ENCODE measurements at regions of chr5 and their contacts with region 1.

Region 1: DNA sequence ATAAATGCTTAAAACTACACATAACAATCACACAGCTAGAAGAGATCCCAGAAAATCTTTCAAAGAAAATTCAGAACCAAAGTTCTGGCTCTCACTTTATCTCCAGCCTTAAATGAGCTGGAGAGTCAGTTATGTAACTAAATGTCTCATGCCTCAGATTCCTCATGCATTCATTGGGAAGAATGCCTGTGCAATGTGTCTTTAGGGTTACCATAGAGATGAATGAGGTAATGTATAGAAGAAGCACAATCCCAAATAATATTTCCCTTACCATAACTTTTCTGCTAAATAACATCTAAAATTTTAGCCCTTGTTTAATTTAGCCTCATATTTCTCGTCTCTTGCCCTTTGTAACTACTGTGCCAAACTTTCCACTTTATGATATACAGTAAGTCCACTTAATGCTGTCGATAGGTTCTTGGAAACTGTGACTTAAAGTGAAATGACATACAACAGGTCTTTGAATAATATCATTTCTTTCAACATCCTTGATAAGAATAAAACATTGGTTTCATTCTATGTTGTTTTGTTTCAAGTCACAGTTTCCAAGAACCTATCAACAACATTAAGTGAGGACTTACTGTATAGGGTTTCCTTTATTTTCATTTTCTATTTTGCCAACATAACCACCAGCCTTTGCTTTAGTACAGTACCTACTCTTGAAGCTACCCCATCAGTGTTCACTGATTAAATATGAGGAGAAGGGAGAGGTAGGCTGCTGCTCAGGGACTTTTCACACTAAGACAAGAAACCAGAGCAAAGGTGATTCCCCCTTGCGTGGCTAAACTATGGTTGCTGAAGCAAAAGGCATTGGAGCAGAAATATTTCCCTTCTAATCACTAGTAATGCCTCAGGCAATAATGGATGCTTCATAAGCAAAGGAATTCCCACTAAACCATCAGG is 295.7 kb upstream of the PTGER4 start:
- DNase-seq: peak; percentile 80
- H3K4me3 Mint-ChIP-seq: peak overlapping the region; percentile 63
- H3K27ac Mint-ChIP-seq: peak overlapping the region; percentile 86
- H3K4me1 Mint-ChIP-seq: peaks cover 70% of the 10 kb centered on the region
- H3K27me3 Mint-ChIP-seq: no peaks in the 10 kb centered on the region

Region 2: GRCh38 chr5:40333459-40334244 is 50.3 kb before region 1 on chr5:
- intact Hi-C with region 1: loop called (anchors 1 kb)
- DNase-seq: peak; percentile 59
- H3K4me3 Mint-ChIP-seq: no peak overlapping the region
- H3K27ac Mint-ChIP-seq: no peak overlapping the region
- H3K4me1 Mint-ChIP-seq: peaks cover 19% of the 10 kb centered on the region
- H3K27me3 Mint-ChIP-seq: no peaks in the 10 kb centered on the region

Region 3: GRCh38 chr5:40365342-40366330 is 18.4 kb before region 1 on chr5:
- intact Hi-C with region 1: no loop called
- DNase-seq: no peak
- H3K4me3 Mint-ChIP-seq: no peak overlapping the region
- H3K27ac Mint-ChIP-seq: no peak overlapping the region
- H3K4me1 Mint-ChIP-seq: peaks cover 4% of the 10 kb centered on the region
- H3K27me3 Mint-ChIP-seq: no peaks in the 10 kb centered on the region

Region 4: GRCh38 chr5:40410231-40410861 is 26.3 kb after region 1 on chr5:
- intact Hi-C with region 1: loop called (anchors 1 kb)
- DNase-seq: peak; percentile 93
- H3K4me3 Mint-ChIP-seq: peak overlapping the region; percentile 79
- H3K27ac Mint-ChIP-seq: peak overlapping the region; percentile 93
- H3K4me1 Mint-ChIP-seq: peaks cover 51% of the 10 kb centered on the region
- H3K27me3 Mint-ChIP-seq: no peaks in the 10 kb centered on the region

Region 5: GRCh38 chr5:40486437-40487275 is 102.7 kb after region 1 on chr5:
- intact Hi-C with region 1: loop called (anchors 1 kb)
- DNase-seq: peak; percentile 89
- H3K4me3 Mint-ChIP-seq: peak overlapping the region; percentile 45
- H3K27ac Mint-ChIP-seq: peak overlapping the region; percentile 89
- H3K4me1 Mint-ChIP-seq: peaks cover 55% of the 10 kb centered on the region
- H3K27me3 Mint-ChIP-seq: no peaks in the 10 kb centered on the region

Region 6: DNA sequence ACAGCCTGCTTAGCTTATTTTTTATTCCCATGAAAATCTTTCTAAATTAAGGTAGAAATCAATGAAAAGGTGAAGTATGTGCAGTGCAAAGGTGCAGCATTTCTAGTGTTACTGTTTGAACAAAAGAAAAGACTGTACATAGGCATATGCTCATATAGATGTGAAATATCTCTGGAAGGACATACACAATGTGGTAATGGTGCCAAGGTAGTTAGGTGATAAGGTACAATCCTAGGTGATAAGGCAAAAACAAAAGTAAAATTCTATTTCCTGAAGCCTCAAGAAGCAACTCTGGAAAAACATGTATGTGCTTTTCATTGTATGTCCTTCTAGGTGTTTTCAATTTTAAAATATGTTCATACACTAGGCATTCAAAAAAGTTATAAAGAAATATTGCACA is 156.3 kb after region 1 on chr5:
- intact Hi-C with region 1: no loop called
- DNase-seq: no peak
- H3K4me3 Mint-ChIP-seq: no peak overlapping the region
- H3K27ac Mint-ChIP-seq: no peak overlapping the region
- H3K4me1 Mint-ChIP-seq: no peaks in the 10 kb centered on the region
- H3K27me3 Mint-ChIP-seq: no peaks in the 10 kb centered on the region

Region 7: GRCh38 chr5:40736103-40736875 is 352.3 kb after region 1 on chr5:
- intact Hi-C with region 1: loop called (anchors 2 kb)
- DNase-seq: peak; percentile 77
- H3K4me3 Mint-ChIP-seq: no peak overlapping the region
- H3K27ac Mint-ChIP-seq: peak overlapping the region; percentile 12
- H3K4me1 Mint-ChIP-seq: peaks cover 18% of the 10 kb centered on the region
- H3K27me3 Mint-ChIP-seq: no peaks in the 10 kb centered on the region